ENCODE measurements at regions of chr17 and their contacts with region 1.

Region 1: GRCh38 chr17:81977211-81978027 is at the start of gene ASPSCR1:
- DNase-seq: peak; percentile 95
- ATAC-seq: peak; percentile 83
- H3K4me3 Mint-ChIP-seq: peak within 1 kb of the TSS; percentile 94
- H3K27ac Mint-ChIP-seq: peak within 1 kb of the TSS; percentile 98
- H3K4me1 Mint-ChIP-seq: peaks cover 32% of the 10 kb centered on the region
- H3K27me3 Mint-ChIP-seq: no peaks in the 10 kb centered on the region
- total RNA-seq, gene ASPSCR1: 23.3 to 26.5 TPM

Region 2: GRCh38 chr17:81034779-81035388 is 942.5 kb before region 1 on chr17 and contains the start of gene BAIAP2:
- CTCF ChIA-PET with region 1: no interaction called
- POLR2A ChIA-PET with region 1: no interaction called
- intact Hi-C with region 1: loop called in 1 of 2 experiments (anchors 10 kb)
- DNase-seq: peak; percentile 99
- ATAC-seq: peak; percentile 91
- H3K4me3 Mint-ChIP-seq: peak within 1 kb of the TSS; percentile 72
- H3K27ac Mint-ChIP-seq: peak within 1 kb of the TSS; percentile 47
- H3K4me1 Mint-ChIP-seq: peaks cover 20% of the 10 kb centered on the region
- H3K27me3 Mint-ChIP-seq: peaks cover 19% of the 10 kb centered on the region
- total RNA-seq, gene BAIAP2: 4.6 to 5.0 TPM

Region 3: GRCh38 chr17:81683584-81684237 is 293.7 kb before region 1 on chr17 and contains the starts of genes ARL16 and HGS:
- CTCF ChIA-PET with region 1: no interaction called
- POLR2A ChIA-PET with region 1: no interaction called
- intact Hi-C with region 1: loop called in 1 of 2 experiments (anchors 1 kb)
- DNase-seq: peak; percentile 98
- ATAC-seq: peak; percentile 98
- H3K4me3 Mint-ChIP-seq: peak within 1 kb of the TSS; percentile 87
- H3K27ac Mint-ChIP-seq: peak within 1 kb of the TSS; percentile 83
- H3K4me1 Mint-ChIP-seq: peaks cover 30% of the 10 kb centered on the region
- H3K27me3 Mint-ChIP-seq: no peaks in the 10 kb centered on the region
- total RNA-seq, gene ARL16: 39.0 to 39.1 TPM
- total RNA-seq, gene HGS: 100 to 102 TPM

Region 4: GRCh38 chr17:81890447-81891299 is 86.7 kb before region 1 on chr17:
- CTCF ChIA-PET with region 1: no interaction called
- POLR2A ChIA-PET with region 1: no interaction called
- intact Hi-C with region 1: loop called in 1 of 2 experiments (anchors 1 kb)
- DNase-seq: peak; percentile 51
- ATAC-seq: no peak
- H3K4me3 Mint-ChIP-seq: peak overlapping the region; percentile 85
- H3K27ac Mint-ChIP-seq: peak overlapping the region; percentile 93
- H3K4me1 Mint-ChIP-seq: peaks cover 32% of the 10 kb centered on the region
- H3K27me3 Mint-ChIP-seq: no peaks in the 10 kb centered on the region

Region 5: GRCh38 chr17:81927653-81928543 is 49.5 kb before region 1 on chr17 and contains the start of gene MAFG:
- CTCF ChIA-PET with region 1: no interaction called
- POLR2A ChIA-PET with region 1: no interaction called
- intact Hi-C with region 1: loop called in 1 of 2 experiments (anchors 2 kb)
- DNase-seq: peak; percentile 94
- ATAC-seq: peak; percentile 62
- H3K4me3 Mint-ChIP-seq: peak within 1 kb of the TSS; percentile 85
- H3K27ac Mint-ChIP-seq: peak within 1 kb of the TSS; percentile 85
- H3K4me1 Mint-ChIP-seq: peaks cover 32% of the 10 kb centered on the region
- H3K27me3 Mint-ChIP-seq: peaks cover 2% of the 10 kb centered on the region
- total RNA-seq, gene MAFG: 15.3 to 18.3 TPM

Region 6: DNA sequence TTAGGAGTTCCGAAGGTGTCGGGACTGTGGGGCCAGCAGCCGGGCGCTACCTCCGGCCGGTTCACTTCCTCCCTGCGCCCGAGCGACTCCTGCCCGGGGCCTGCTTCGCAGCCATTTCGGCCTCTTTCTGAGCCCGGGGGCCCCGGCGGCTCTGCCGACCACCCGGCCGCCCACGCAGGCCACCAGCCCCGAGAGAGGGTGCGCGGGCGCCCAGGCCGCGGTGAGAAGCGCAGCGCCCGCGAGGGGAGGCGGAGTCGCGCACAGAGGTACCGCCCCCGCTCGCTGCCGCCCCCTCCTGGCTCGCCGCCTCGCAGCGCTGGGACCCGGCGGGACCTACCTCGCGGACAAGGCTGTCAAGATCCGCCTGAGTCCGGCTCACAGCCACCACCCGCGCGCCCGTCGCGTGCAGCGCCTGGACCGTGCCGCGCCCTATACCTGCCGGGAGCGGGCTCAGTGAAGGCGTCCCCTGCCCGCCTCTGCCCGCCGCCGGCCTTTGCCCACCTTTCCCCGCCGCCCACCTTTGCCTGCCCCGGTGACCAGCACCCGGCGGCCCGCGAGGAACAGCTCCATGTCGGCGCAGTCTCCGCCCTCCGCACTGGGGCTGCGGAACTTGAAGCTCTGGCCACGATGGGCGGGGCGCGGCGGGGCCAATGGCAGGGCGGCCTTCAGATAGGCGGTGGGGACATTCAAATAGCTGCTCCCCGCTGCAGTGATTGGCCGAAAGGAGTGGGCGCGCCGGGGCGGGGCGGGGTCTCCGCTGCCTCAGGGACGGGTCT is 59.9 kb after region 1 on chr17 and contains the start of gene DCXR:
- CTCF ChIA-PET with region 1: interaction called, 6 read pairs
- POLR2A ChIA-PET with region 1: no interaction called
- intact Hi-C with region 1: loop called in 1 of 2 experiments (anchors 1 kb)
- DNase-seq: peak; percentile 97
- ATAC-seq: peak; percentile 97
- H3K4me3 Mint-ChIP-seq: peak within 1 kb of the TSS; percentile 82
- H3K27ac Mint-ChIP-seq: peak within 1 kb of the TSS; percentile 80
- H3K4me1 Mint-ChIP-seq: peaks cover 23% of the 10 kb centered on the region
- H3K27me3 Mint-ChIP-seq: no peaks in the 10 kb centered on the region
- total RNA-seq, gene DCXR: 105 to 166 TPM

Region 7: GRCh38 chr17:82457997-82458864 is 480.8 kb after region 1 on chr17 and contains the start of gene NARF:
- CTCF ChIA-PET with region 1: no interaction called
- POLR2A ChIA-PET with region 1: no interaction called
- intact Hi-C with region 1: loop called in 1 of 2 experiments (anchors 1 kb)
- DNase-seq: peak; percentile 98
- ATAC-seq: peak; percentile 99
- H3K4me3 Mint-ChIP-seq: peak within 1 kb of the TSS; percentile 79
- H3K27ac Mint-ChIP-seq: peak within 1 kb of the TSS; percentile 99
- H3K4me1 Mint-ChIP-seq: peaks cover 28% of the 10 kb centered on the region
- H3K27me3 Mint-ChIP-seq: no peaks in the 10 kb centered on the region
- total RNA-seq, gene NARF: 65.4 to 85.9 TPM